Right ventricle myocardium inferior (tissue), 1 donor: ENCODE measurements at regions of chr22 and their contacts with region 1.

Region 1: GRCh38 chr22:39234269-39234787 is 10.5 kb downstream of the PDGFB start:
- DNase-seq: peak; percentile 76
- ATAC-seq: peak; percentile 60

Region 2: GRCh38 chr22:39278040-39278439 is 43.7 kb after region 1 on chr22:
- intact Hi-C with region 1: loop called (anchors 2 kb)
- DNase-seq: peak; percentile 78
- ATAC-seq: peak; percentile 45